ENCODE measurements at regions of chr4 and their contacts with region 1.

Region 1: DNA sequence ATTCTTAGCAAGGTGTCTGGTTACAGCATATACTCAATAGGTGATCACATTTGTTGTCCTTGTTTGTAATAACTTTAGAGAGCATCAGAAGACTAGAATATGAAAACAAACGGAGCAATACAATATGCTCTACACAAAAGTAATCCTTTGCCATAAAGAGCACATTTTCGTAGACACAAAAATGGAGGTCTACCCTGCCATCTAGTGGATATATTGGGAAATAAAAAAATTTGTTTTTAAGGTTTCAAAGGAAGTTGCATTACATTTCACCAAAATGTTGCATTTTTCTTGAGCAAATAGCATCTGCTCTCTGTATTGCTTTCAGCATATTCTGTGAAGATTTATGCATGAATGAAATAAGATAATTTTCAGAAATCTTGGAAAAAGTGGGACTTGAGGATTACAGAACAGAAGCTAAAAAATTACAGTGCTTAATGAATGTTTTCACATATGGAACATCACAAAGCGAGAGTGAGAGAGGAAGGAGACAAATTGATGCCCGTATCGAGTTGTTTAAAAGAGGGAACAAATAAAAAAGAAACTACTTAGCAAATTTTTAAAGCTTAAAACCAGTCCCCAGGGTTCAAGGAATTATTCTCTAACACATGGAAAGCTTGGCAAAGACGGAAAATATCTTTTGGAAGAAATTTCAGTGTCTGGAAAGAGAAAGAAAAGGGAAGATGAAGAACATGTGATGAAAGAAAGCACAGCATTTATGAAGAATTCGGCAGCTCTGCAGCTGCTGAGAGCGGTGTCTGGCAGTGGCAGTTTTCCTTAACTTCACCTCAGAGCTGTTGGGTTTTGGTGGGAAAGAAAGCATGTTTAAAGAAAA is 390.1 kb downstream of the ANKRD50 start:
- DNase-seq: no peak
- H3K4me3 Mint-ChIP-seq: no peak overlapping the region
- H3K27ac Mint-ChIP-seq: no peak overlapping the region
- H3K4me1 Mint-ChIP-seq: no peaks in the 10 kb centered on the region
- H3K27me3 Mint-ChIP-seq: peaks cover 1% of the 10 kb centered on the region

Region 2: GRCh38 chr4:123102897-123103471 is 1219.5 kb before region 1 on chr4:
- CTCF ChIA-PET with region 1: interaction called, 3 read pairs
- POLR2A ChIA-PET with region 1: no interaction called
- intact Hi-C with region 1: loop called (anchors 1 kb)
- DNase-seq: no peak
- H3K4me3 Mint-ChIP-seq: no peak overlapping the region
- H3K27ac Mint-ChIP-seq: no peak overlapping the region
- H3K4me1 Mint-ChIP-seq: no peaks in the 10 kb centered on the region
- H3K27me3 Mint-ChIP-seq: no peaks in the 10 kb centered on the region

Region 3: GRCh38 chr4:123390846-123391456 is 931.5 kb before region 1 on chr4:
- CTCF ChIA-PET with region 1: no interaction called
- POLR2A ChIA-PET with region 1: no interaction called
- intact Hi-C with region 1: loop called (anchors 2 kb)
- DNase-seq: no peak
- H3K4me3 Mint-ChIP-seq: no peak overlapping the region
- H3K27ac Mint-ChIP-seq: no peak overlapping the region
- H3K4me1 Mint-ChIP-seq: peaks cover 3% of the 10 kb centered on the region
- H3K27me3 Mint-ChIP-seq: peaks cover 3% of the 10 kb centered on the region

Region 4: DNA sequence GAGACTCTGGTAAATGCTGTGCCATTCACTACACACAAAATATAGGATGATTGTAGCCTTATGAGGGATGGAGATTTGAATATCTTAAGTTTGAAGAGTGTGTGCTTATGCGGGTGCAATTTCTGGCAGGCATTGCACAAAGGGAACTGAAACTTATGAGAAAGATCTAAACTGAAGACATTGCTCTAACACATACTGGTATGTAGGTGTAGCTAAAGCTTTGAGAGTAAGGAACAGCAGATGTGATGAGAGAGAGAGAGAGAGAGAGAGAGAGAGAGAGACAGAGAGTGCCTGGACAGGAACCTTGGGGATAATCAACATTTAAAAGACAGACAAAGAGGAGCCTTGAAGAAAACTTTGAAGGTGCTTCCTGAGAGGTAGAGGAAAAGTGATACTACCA is 546.2 kb before region 1 on chr4:
- CTCF ChIA-PET with region 1: interaction called, 7 read pairs
- POLR2A ChIA-PET with region 1: no interaction called
- intact Hi-C with region 1: loop called (anchors 2 kb)
- DNase-seq: no peak
- H3K4me3 Mint-ChIP-seq: no peak overlapping the region
- H3K27ac Mint-ChIP-seq: no peak overlapping the region
- H3K4me1 Mint-ChIP-seq: no peaks in the 10 kb centered on the region
- H3K27me3 Mint-ChIP-seq: no peaks in the 10 kb centered on the region

Region 5: GRCh38 chr4:124224256-124224655 is 98.2 kb before region 1 on chr4:
- CTCF ChIA-PET with region 1: no interaction called
- POLR2A ChIA-PET with region 1: no interaction called
- intact Hi-C with region 1: no loop called
- DNase-seq: no peak
- H3K4me3 Mint-ChIP-seq: no peak overlapping the region
- H3K27ac Mint-ChIP-seq: no peak overlapping the region
- H3K4me1 Mint-ChIP-seq: no peaks in the 10 kb centered on the region
- H3K27me3 Mint-ChIP-seq: no peaks in the 10 kb centered on the region

Region 6: DNA sequence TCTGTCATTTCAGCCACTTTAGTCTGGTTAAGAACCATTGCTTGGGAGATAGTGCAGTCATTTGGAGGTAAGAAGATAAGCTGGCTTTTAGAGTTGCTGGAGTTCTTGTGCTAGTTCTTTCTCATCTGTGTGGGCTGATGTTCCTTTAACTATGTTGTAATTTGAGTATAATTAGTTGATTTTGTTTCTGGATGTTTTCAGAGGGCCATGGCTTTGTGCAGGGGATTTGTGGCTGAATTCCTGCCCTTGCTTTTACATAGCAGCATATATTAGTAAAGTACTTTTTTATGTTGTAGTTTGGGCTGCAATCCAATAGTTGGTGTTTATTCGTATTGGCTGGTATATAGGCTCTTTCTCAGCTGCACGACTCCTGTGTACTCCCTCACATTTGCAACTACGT is 50.5 kb after region 1 on chr4:
- CTCF ChIA-PET with region 1: no interaction called
- POLR2A ChIA-PET with region 1: no interaction called
- intact Hi-C with region 1: no loop called
- DNase-seq: no peak
- H3K4me3 Mint-ChIP-seq: no peak overlapping the region
- H3K27ac Mint-ChIP-seq: no peak overlapping the region
- H3K4me1 Mint-ChIP-seq: no peaks in the 10 kb centered on the region
- H3K27me3 Mint-ChIP-seq: no peaks in the 10 kb centered on the region

Region 7: DNA sequence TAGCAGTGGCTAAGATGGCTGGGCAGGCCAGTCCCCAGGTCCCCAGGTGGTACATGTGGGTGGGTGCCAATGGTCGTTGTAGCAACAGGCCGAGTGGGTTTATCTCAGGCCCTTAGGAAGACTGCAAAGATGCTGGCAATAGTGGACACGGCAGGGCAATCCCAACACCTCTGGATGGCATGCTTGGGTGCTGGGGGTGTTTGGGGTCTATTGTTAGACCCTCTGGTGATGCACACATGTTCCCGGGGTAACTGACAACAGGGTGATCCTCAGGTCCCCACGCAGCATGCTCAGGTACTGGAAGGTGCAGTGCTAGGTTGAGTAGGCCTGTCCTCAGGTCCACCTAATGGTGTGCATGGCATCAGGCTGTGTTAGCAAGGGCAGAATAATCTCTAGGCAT is 122.6 kb after region 1 on chr4:
- CTCF ChIA-PET with region 1: no interaction called
- POLR2A ChIA-PET with region 1: no interaction called
- intact Hi-C with region 1: no loop called
- DNase-seq: no peak
- H3K4me3 Mint-ChIP-seq: no peak overlapping the region
- H3K27ac Mint-ChIP-seq: no peak overlapping the region
- H3K4me1 Mint-ChIP-seq: no peaks in the 10 kb centered on the region
- H3K27me3 Mint-ChIP-seq: peaks cover 2% of the 10 kb centered on the region

Measured in activated CD4-positive, alpha-beta memory T cell treated with anti-CD3 and anti-CD28 coated beads for 36 hours (primary cell).